ENCODE measurements at regions of chr13 and their contacts with region 1.

Region 1: DNA sequence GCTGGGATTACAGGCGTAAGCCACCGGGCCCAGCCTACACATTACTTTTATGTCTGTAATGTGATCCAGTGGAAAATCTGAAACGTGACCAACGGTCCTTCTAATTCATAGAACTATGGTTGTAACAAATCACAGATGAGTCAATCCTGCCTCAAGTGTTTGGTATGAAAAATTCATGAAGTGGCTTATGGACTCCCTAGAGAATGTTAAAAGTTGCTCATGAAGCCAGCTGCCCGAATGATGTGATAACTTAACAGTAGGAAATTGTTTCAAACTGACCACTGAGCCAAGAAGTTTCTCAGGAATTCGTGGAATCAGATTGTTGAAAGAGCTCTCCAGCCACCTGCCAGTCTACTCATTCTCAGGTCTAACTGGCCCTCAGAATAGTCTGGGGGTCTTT is 59.4 kb upstream of the FARP1 start:
- DNase-seq: peak; percentile 41
- ATAC-seq: no peak
- H3K4me3 ChIP-seq: no peak overlapping the region
- H3K27ac ChIP-seq: no peak overlapping the region
- H3K4me1 ChIP-seq: no peaks in the 10 kb centered on the region
- H3K27me3 ChIP-seq: no peaks in the 10 kb centered on the region
- CTCF ChIP-seq: no peak

Region 2: DNA sequence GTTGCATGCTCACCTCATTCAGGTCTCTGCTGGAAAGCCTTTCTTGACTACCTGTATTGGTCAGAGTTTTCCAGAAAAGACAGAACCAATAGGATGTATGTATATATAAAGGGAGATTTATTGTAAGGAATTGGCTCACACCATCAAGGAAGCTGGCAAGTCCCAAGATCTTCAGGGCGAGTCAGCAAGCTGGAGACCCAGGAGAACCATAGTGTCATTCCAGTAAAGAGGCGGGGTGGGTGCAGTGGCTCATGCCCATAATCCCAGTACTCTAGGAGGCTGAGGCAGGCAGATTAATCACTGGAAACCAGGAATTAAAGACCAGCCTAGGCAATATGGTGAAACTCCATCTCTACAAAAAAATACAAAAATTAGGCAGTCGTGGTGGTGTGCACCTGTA is 28.9 kb after region 1 on chr13:
- CTCF ChIA-PET with region 1: no interaction called
- POLR2A ChIA-PET with region 1: interaction called, 33 read pairs
- intact Hi-C with region 1: no loop called
- DNase-seq: no peak
- ATAC-seq: no peak
- H3K4me3 ChIP-seq: no peak overlapping the region
- H3K27ac ChIP-seq: no peak overlapping the region
- H3K4me1 ChIP-seq: no peaks in the 10 kb centered on the region
- H3K27me3 ChIP-seq: no peaks in the 10 kb centered on the region
- CTCF ChIP-seq: no peak

Region 3: GRCh38 chr13:98216135-98216565 is 132.6 kb after region 1 on chr13:
- CTCF ChIA-PET with region 1: no interaction called
- POLR2A ChIA-PET with region 1: no interaction called
- intact Hi-C with region 1: no loop called
- DNase-seq: peak; percentile 69
- ATAC-seq: peak; percentile 23; the same call in 1 of the 2 replicates
- H3K4me3 ChIP-seq: no peak overlapping the region
- H3K27ac ChIP-seq: peak overlapping the region; percentile 97
- H3K4me1 ChIP-seq: peaks cover 48% of the 10 kb centered on the region
- H3K27me3 ChIP-seq: no peaks in the 10 kb centered on the region
- CTCF ChIP-seq: no peak

Region 4: GRCh38 chr13:99374994-99375737 is 1291.7 kb after region 1 on chr13:
- CTCF ChIA-PET with region 1: no interaction called
- POLR2A ChIA-PET with region 1: no interaction called
- intact Hi-C with region 1: no loop called
- DNase-seq: no peak
- ATAC-seq: no peak
- H3K4me3 ChIP-seq: no peak overlapping the region
- H3K27ac ChIP-seq: no peak overlapping the region
- H3K4me1 ChIP-seq: no peaks in the 10 kb centered on the region
- H3K27me3 ChIP-seq: no peaks in the 10 kb centered on the region
- CTCF ChIP-seq: no peak

Measured in PC-3 (cell line).